Gastrocnemius medialis (tissue), 4 donors: ENCODE measurements at regions of chr2 and their contacts with region 1.

Region 1: DNA sequence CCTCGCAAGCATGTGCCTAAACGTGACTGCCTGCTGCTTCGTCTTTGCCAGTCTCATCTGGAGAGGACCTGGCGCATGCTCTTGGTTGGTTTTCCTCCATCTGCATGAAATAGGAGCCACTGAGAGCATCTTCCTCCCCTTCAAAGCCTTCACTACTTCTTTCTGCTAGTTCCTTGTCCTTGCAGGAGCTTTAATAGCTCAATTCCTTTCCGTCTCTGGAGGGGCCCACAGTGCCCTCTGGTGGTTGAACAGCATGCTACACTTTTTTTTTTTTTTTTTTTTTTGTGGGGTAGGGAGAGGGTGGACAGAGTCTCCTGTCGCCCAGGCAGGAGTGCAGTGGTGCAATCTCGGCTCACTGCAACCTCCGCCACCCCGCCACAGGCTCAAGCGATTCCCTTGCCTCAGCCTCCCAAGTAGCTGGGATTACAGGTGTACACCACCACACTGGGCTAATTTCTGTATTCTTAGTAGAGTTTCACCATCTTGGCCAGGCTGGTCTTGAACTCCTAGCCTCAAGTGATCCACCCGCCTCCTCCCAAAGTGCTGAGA is 59.6 kb downstream of the SP110 start:
- DNase-seq: no peak
- ATAC-seq: peak in 1 of 2 donors; percentile 51
- H3K4me3 ChIP-seq: no peak overlapping the region
- H3K27ac ChIP-seq: no peak overlapping the region
- H3K4me1 ChIP-seq: no peaks in the 10 kb centered on the region
- H3K27me3 ChIP-seq: no peaks in the 10 kb centered on the region
- CTCF ChIP-seq: peak; percentile 19 to 75 (median 63)
- POLR2A ChIP-seq: no peak

Region 2: GRCh38 chr2:230007931-230008707 is 152.1 kb before region 1 on chr2:
- in situ Hi-C with region 1: no loop called
- intact Hi-C with region 1: loop called (anchors 2 kb)
- DNase-seq: peak; percentile 17 to 50
- ATAC-seq: peak; percentile 24 to 42
- H3K4me3 ChIP-seq: peak overlapping the region in 2 of 4 donors; percentile 15 to 22
- H3K27ac ChIP-seq: no peak overlapping the region
- H3K4me1 ChIP-seq: peaks cover 0 to 6% of the 10 kb centered on the region in 2 donors
- H3K27me3 ChIP-seq: no peaks in the 10 kb centered on the region
- CTCF ChIP-seq: peak; percentile 53 to 77 (median 65)
- POLR2A ChIP-seq: no peak

Region 3: GRCh38 chr2:230068016-230068650 is 92.1 kb before region 1 on chr2:
- in situ Hi-C with region 1: no loop called
- intact Hi-C with region 1: loop called (anchors 5 kb)
- DNase-seq: no peak
- ATAC-seq: peak; percentile 30 to 31
- H3K4me3 ChIP-seq: peak overlapping the region; percentile 53 to 67 (median 62)
- H3K27ac ChIP-seq: peak overlapping the region; percentile 39 to 66 (median 52)
- H3K4me1 ChIP-seq: peaks cover 0 to 10% of the 10 kb centered on the region in 2 donors
- H3K27me3 ChIP-seq: peaks cover 0 to 7% (median 4%) of the 10 kb centered on the region in 3 donors
- CTCF ChIP-seq: no peak
- POLR2A ChIP-seq: no peak

Region 4: DNA sequence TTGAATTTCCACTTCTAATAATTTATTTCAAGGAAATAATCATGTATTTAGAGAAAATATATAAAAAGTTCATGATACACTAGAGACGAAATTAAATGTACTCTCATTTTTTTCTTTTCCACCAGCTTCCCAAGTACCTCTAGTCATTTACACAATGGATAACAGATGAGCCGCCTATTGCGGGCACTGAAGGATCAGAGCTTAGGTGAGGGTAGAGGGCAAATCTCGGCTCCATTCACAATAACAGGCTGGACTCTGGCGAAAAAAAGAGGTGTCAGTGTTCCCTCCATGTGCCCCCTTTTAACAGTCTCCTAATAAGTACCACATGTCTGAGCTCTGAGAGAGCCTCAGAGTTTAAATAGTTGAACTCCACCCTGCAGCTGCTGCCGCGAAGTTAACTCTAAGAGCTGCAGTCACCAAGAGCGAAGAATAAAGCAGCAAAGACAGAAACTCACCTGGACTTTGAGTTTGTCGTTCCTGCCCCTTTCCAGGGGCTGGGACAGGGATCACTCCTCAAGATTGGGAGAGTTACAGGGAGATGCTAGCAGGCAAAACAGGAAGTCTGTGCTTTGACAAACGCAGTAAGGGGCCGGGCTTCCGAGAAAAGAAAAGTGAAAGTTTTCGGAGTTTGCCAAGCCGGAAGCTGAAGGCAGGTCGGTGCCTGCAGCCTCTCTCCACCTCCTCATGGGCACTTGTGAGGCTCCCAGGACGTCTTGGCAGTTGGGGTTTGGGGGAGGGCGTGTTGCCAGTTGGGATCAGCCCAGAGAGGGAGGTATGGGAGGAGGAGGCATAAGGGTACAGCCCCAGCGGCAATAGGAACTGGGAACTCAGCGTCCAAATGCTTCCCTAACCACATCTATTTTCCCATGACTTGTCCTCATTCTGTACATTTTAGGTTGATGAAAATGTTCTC is 59.5 kb after region 1 on chr2 and contains the start of gene SP110:
- in situ Hi-C with region 1: no loop called
- intact Hi-C with region 1: no loop called
- DNase-seq: peak; percentile 54 to 71
- ATAC-seq: peak; percentile 87 to 97
- H3K4me3 ChIP-seq: peak within 1 kb of the TSS; percentile 60 to 88 (median 70)
- H3K27ac ChIP-seq: peak within 1 kb of the TSS; percentile 63 to 78 (median 76)
- H3K4me1 ChIP-seq: peaks cover 5 to 6% of the 10 kb centered on the region in 2 donors
- H3K27me3 ChIP-seq: no peaks in the 10 kb centered on the region
- CTCF ChIP-seq: no peak
- POLR2A ChIP-seq: peak in 1 of 2 donors; percentile 10
- total RNA-seq, gene SP110: 3.0 to 7.0 (median 6.5) TPM